ENCODE measurements at regions of chr7 and their contacts with region 1.

Region 1: GRCh38 chr7:25083201-25083600 is 41.9 kb downstream of the CYCS start:
- DNase-seq: no peak
- ATAC-seq: no peak
- H3K4me3 ChIP-seq: no peak overlapping the region
- H3K4me3 Mint-ChIP-seq: no peak overlapping the region
- H3K27ac ChIP-seq: no peak overlapping the region
- H3K27ac Mint-ChIP-seq: no peak overlapping the region
- H3K4me1 ChIP-seq: no peaks in the 10 kb centered on the region
- H3K4me1 Mint-ChIP-seq: no peaks in the 10 kb centered on the region
- H3K27me3 ChIP-seq: peaks cover 0 to 3% of the 10 kb centered on the region in 2 experiments
- H3K27me3 Mint-ChIP-seq: peaks cover 16 to 19% of the 10 kb centered on the region in 2 donors

Region 2: GRCh38 chr7:24442170-24442777 is 640.9 kb before region 1 on chr7:
- CTCF ChIA-PET with region 1: no interaction called
- POLR2A ChIA-PET with region 1: interaction called in 1 of 2 experiments, 14 read pairs
- DNase-seq: peak in 3 of 35 experiments; percentile 1 to 17 (median 17)
- ATAC-seq: no peak
- H3K4me3 ChIP-seq: no peak overlapping the region
- H3K4me3 Mint-ChIP-seq: no peak overlapping the region
- H3K27ac ChIP-seq: peak overlapping the region; percentile 72
- H3K27ac Mint-ChIP-seq: peak overlapping the region in 1 of 2 donors; percentile 33
- H3K4me1 ChIP-seq: peaks cover 4 to 5% of the 10 kb centered on the region in 2 experiments
- H3K4me1 Mint-ChIP-seq: peaks cover 8 to 24% (median 11%) of the 10 kb centered on the region in 3 donors
- H3K27me3 ChIP-seq: no peaks in the 10 kb centered on the region
- H3K27me3 Mint-ChIP-seq: peaks cover 0 to 6% of the 10 kb centered on the region in 2 donors

Region 3: DNA sequence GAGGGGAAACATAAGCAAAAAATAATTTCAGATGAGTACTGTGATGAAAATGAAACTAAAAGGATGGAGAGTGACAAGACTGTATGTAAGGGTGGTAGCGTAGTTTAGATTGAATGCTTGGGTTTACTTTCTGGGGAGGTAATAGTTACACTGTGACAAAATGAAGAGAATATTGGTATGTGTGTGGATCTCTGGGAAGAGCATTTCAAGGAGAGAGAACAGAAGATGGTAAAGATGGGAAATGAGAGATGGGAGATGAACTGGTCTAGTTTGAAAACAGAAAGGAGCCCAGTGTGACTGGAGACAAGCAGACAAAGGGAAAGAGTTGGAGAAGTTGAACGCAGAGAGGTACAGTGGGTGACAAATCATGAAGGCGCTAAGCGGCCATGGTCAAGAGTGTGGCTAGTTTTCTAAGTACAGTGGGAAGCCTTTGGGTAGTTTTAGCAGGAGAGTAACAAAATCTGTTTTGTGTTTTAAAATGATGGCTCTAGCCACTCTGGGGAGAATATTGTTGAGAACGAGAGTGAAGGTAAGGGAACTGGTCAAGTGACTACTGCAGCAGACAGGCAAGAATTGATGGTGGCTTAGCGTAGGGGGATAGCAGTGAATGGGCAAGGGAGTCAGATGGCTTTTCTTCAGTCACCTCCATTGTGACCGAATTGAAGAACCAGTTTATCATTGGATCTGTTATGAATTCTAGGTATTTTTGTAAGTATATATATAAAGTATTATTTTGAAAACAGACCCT is 487.4 kb before region 1 on chr7:
- CTCF ChIA-PET with region 1: no interaction called
- POLR2A ChIA-PET with region 1: no interaction called
- DNase-seq: peak in 2 of 35 experiments; percentile 12 to 17
- ATAC-seq: peak in 3 of 4 experiments; percentile 57 to 74 (median 74)
- H3K4me3 ChIP-seq: peak overlapping the region in 1 of 2 donors; percentile 19
- H3K4me3 Mint-ChIP-seq: no peak overlapping the region
- H3K27ac ChIP-seq: peak overlapping the region; percentile 13
- H3K27ac Mint-ChIP-seq: no peak overlapping the region
- H3K4me1 ChIP-seq: peaks cover 0 to 3% of the 10 kb centered on the region in 2 experiments
- H3K4me1 Mint-ChIP-seq: peaks cover 5 to 12% (median 10%) of the 10 kb centered on the region in 3 donors
- H3K27me3 ChIP-seq: no peaks in the 10 kb centered on the region
- H3K27me3 Mint-ChIP-seq: no peaks in the 10 kb centered on the region

Region 4: GRCh38 chr7:25093268-25093826 is 10.1 kb after region 1 on chr7:
- CTCF ChIA-PET with region 1: interaction called, 3 to 10 read pairs
- POLR2A ChIA-PET with region 1: no interaction called
- DNase-seq: peak; percentile 22 to 80 (median 68)
- ATAC-seq: peak; percentile 77 to 80 (median 78)
- H3K4me3 ChIP-seq: no peak overlapping the region
- H3K4me3 Mint-ChIP-seq: no peak overlapping the region
- H3K27ac ChIP-seq: no peak overlapping the region
- H3K27ac Mint-ChIP-seq: no peak overlapping the region
- H3K4me1 ChIP-seq: peaks cover 0 to 8% of the 10 kb centered on the region in 2 experiments
- H3K4me1 Mint-ChIP-seq: peaks cover 5 to 11% (median 5%) of the 10 kb centered on the region in 3 donors
- H3K27me3 ChIP-seq: no peaks in the 10 kb centered on the region
- H3K27me3 Mint-ChIP-seq: no peaks in the 10 kb centered on the region

Region 5: DNA sequence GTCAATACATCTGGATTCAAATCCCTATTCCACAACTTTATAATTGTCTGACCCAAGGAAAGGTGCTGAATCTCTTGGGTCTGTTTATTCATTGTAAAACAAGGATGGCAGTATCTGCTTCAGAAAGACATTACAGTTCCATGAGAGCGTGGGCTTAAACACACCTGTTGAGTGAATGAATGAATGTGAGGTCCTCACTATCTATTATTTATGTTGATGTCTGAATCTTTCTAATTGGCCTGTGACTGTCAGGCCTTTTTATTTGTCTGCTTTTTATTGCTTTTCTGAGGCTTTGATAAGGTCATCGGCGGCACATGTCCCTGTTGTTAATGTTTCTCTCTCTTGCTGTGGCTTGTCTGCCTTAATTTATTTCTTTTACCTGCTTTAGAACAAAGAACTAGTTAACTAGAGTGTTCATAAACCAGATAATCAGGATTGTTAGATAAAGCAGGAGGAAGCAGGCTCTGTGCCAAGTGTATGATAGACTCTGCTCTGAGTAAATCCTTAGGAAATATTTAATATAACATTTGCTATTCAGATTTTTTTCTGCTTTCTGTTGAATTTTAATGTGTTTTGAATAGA is 84.2 kb after region 1 on chr7:
- CTCF ChIA-PET with region 1: no interaction called
- POLR2A ChIA-PET with region 1: no interaction called
- DNase-seq: no peak
- ATAC-seq: no peak
- H3K4me3 ChIP-seq: no peak overlapping the region
- H3K4me3 Mint-ChIP-seq: no peak overlapping the region
- H3K27ac ChIP-seq: no peak overlapping the region
- H3K27ac Mint-ChIP-seq: no peak overlapping the region
- H3K4me1 ChIP-seq: no peaks in the 10 kb centered on the region
- H3K4me1 Mint-ChIP-seq: no peaks in the 10 kb centered on the region
- H3K27me3 ChIP-seq: no peaks in the 10 kb centered on the region
- H3K27me3 Mint-ChIP-seq: no peaks in the 10 kb centered on the region

Measured in T-cell (primary cell).